Activated CD4-positive, alpha-beta T cell treated with anti-CD3 and anti-CD28 coated beads for 36 hours (primary cell): ENCODE measurements at regions of chr18 and their contacts with region 1.

Region 1: GRCh38 chr18:64409511-64409910 is 260.6 kb upstream of the LINC00305 start:
- DNase-seq: no peak
- ATAC-seq: no peak
- H3K4me3 Mint-ChIP-seq: no peak overlapping the region
- H3K27ac Mint-ChIP-seq: no peak overlapping the region
- H3K4me1 Mint-ChIP-seq: no peaks in the 10 kb centered on the region
- H3K27me3 Mint-ChIP-seq: no peaks in the 10 kb centered on the region

Region 2: GRCh38 chr18:64017870-64018269 is 391.6 kb before region 1 on chr18:
- CTCF ChIA-PET with region 1: no interaction called
- POLR2A ChIA-PET with region 1: no interaction called
- intact Hi-C with region 1: loop called in 1 of 2 experiments (anchors 2 kb)
- DNase-seq: no peak
- ATAC-seq: no peak
- H3K4me3 Mint-ChIP-seq: no peak overlapping the region
- H3K27ac Mint-ChIP-seq: no peak overlapping the region
- H3K4me1 Mint-ChIP-seq: no peaks in the 10 kb centered on the region
- H3K27me3 Mint-ChIP-seq: peaks cover 4% of the 10 kb centered on the region

Region 3: GRCh38 chr18:65487569-65487968 is 1078.1 kb after region 1 on chr18:
- CTCF ChIA-PET with region 1: no interaction called
- POLR2A ChIA-PET with region 1: no interaction called
- intact Hi-C with region 1: no loop called
- DNase-seq: no peak
- ATAC-seq: no peak
- H3K4me3 Mint-ChIP-seq: no peak overlapping the region
- H3K27ac Mint-ChIP-seq: no peak overlapping the region
- H3K4me1 Mint-ChIP-seq: no peaks in the 10 kb centered on the region
- H3K27me3 Mint-ChIP-seq: no peaks in the 10 kb centered on the region